Aorta (tissue), 5 donors: ENCODE measurements at regions of chr2 and their contacts with region 1.

Region 1: GRCh38 chr2:43484323-43484930 is 111.4 kb downstream of the THADA start:
- DNase-seq: no peak
- ATAC-seq: peak; percentile 79
- H3K4me3 ChIP-seq: no peak overlapping the region
- H3K27ac ChIP-seq: no peak overlapping the region
- H3K4me1 ChIP-seq: peaks cover 0 to 8% of the 10 kb centered on the region in 2 donors
- H3K27me3 ChIP-seq: no peaks in the 10 kb centered on the region

Region 2: DNA sequence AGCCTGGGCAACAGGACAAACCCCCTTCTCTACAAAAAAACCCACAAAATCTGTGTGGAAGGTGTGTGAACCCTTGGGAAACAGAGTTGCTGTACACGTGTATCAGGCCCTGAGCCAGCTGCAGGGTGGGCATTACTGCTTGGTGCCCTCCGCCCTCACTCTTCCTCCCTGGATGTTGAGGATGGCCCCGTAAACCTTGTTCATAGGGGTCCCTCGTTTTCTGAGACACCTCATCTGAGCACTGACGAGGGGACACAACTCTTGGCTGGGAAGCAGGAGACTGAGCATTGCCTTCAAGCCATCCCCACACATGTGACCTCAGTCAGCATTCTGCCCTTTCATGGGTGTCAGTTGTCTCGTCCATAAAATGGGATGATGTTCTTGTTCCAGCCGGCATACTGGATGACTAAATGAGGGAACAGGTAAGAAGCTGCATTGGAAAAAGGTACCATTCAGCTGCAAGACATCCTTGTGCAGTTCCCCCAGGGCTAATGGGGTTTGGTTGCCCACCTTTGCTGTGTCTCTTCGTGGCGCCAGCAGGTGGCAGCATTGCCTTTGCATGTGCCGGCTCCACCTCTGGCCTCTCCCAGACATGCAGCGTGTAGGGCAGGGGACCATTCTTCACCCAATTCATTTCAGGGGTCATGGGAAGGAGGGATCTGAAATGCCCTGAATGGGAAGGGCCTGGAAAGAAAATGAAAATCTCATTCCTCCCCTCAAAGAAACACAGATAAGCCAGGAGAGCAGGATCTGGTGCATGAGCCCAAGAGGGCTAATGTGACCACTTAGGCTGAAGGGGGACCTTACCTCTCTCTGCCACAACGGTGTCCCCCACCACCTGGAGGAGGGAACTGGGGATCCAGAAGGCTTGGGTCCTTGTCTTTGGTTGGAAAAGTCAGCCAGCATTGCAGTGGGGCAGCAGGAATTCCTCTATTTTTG is 655.7 kb before region 1 on chr2:
- intact Hi-C with region 1: loop called (anchors 5 to 10 kb)
- DNase-seq: peak; percentile 84 to 90
- ATAC-seq: peak; percentile 94
- H3K4me3 ChIP-seq: no peak overlapping the region
- H3K27ac ChIP-seq: no peak overlapping the region
- H3K4me1 ChIP-seq: no peaks in the 10 kb centered on the region
- H3K27me3 ChIP-seq: no peaks in the 10 kb centered on the region

Region 3: GRCh38 chr2:42944779-42945415 is 539.5 kb before region 1 on chr2:
- intact Hi-C with region 1: loop called (anchors 5 kb)
- DNase-seq: no peak
- ATAC-seq: no peak
- H3K4me3 ChIP-seq: no peak overlapping the region
- H3K27ac ChIP-seq: no peak overlapping the region
- H3K4me1 ChIP-seq: no peaks in the 10 kb centered on the region
- H3K27me3 ChIP-seq: no peaks in the 10 kb centered on the region

Region 4: GRCh38 chr2:42974721-42975717 is 509.4 kb before region 1 on chr2:
- intact Hi-C with region 1: loop called in 1 of 2 experiments (anchors 10 kb)
- DNase-seq: peak; percentile 90 to 93
- ATAC-seq: peak; percentile 93
- H3K4me3 ChIP-seq: peak overlapping the region in 1 of 2 donors; percentile 53
- H3K27ac ChIP-seq: no peak overlapping the region
- H3K4me1 ChIP-seq: no peaks in the 10 kb centered on the region
- H3K27me3 ChIP-seq: no peaks in the 10 kb centered on the region

Region 5: DNA sequence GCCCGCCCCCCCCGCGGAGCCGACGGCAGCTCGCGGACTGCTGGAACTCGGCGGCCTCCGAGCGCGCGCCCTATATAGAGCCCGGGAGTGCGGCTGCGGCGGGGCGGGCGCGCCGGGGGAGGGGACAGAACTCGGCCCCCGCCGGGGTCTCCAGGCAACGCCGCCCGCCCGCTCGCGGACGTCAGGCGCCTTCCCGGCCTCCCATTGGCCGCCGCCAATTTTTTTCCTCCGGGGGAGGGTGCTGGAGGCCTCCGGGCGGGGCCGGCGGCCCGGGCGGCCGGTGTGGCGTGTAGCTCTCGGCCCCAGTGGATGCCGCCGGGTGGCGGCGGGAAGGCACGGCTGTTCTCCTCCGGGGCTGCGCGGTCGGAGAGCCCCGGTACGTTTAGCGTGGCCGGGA is 257.9 kb before region 1 on chr2 and contains the start of gene ZFP36L2:
- intact Hi-C with region 1: loop called (anchors 5 kb)
- DNase-seq: peak; percentile 98
- ATAC-seq: peak; percentile 89
- H3K4me3 ChIP-seq: peak within 1 kb of the TSS; percentile 74 to 96
- H3K27ac ChIP-seq: peak within 1 kb of the TSS; percentile 71 to 94
- H3K4me1 ChIP-seq: no peaks in the 10 kb centered on the region
- H3K27me3 ChIP-seq: no peaks in the 10 kb centered on the region
- total RNA-seq, gene ZFP36L2: 180 to 231 TPM

Region 6: GRCh38 chr2:43519643-43520221 is 35.3 kb after region 1 on chr2:
- intact Hi-C with region 1: loop called in 1 of 2 experiments (anchors 5 kb)
- DNase-seq: peak in 1 of 2 donors; percentile 45
- ATAC-seq: peak; percentile 79
- H3K4me3 ChIP-seq: no peak overlapping the region
- H3K27ac ChIP-seq: peak overlapping the region; percentile 96 to 98
- H3K4me1 ChIP-seq: peaks cover 6 to 15% of the 10 kb centered on the region in 2 donors
- H3K27me3 ChIP-seq: no peaks in the 10 kb centered on the region

Region 7: GRCh38 chr2:43542285-43542937 is 58.0 kb after region 1 on chr2:
- intact Hi-C with region 1: loop called (anchors 5 kb)
- DNase-seq: no peak
- ATAC-seq: peak; percentile 72
- H3K4me3 ChIP-seq: no peak overlapping the region
- H3K27ac ChIP-seq: no peak overlapping the region
- H3K4me1 ChIP-seq: peaks cover 2 to 17% of the 10 kb centered on the region in 2 donors
- H3K27me3 ChIP-seq: no peaks in the 10 kb centered on the region